SK-N-SH (cell line): ENCODE measurements at regions of chr2 and their contacts with region 1.

Region 1: DNA sequence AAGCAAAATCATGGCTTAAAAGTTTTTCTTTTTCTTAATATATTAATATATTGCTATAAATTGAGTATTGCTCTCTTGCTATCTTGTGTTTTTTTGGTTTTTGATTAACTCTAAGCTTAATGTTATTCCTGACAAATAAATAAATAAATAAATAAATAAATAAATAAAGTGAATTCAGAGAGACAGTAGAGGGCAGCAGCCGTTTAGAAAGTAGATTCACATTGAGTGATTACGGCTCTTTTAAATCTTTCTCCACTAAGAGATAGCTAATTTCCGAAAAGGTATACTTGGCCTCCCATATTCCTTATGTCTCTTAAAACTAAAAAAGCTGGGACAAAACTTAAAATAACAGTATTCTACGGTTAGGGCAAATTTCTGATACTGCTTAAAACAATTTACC is 34.3 kb downstream of the MSH2 start:
- DNase-seq: peak; percentile 64
- H3K4me3 ChIP-seq: no peak overlapping the region
- H3K27ac ChIP-seq: no peak overlapping the region
- H3K4me1 ChIP-seq: no peaks in the 10 kb centered on the region
- H3K27me3 ChIP-seq: no peaks in the 10 kb centered on the region
- CTCF ChIP-seq: peak; percentile 63
- EP300 ChIP-seq: no peak
- RAD21 ChIP-seq: peak; percentile 68

Region 2: GRCh38 chr2:47414682-47415458 is 22.4 kb before region 1 on chr2:
- CTCF ChIA-PET with region 1: interaction called, 12 read pairs
- POLR2A ChIA-PET with region 1: interaction called, 4 read pairs
- DNase-seq: no peak
- H3K4me3 ChIP-seq: no peak overlapping the region
- H3K27ac ChIP-seq: no peak overlapping the region
- H3K4me1 ChIP-seq: no peaks in the 10 kb centered on the region
- H3K27me3 ChIP-seq: no peaks in the 10 kb centered on the region
- CTCF ChIP-seq: no peak
- EP300 ChIP-seq: no peak
- RAD21 ChIP-seq: no peak

Region 3: GRCh38 chr2:47452761-47453160 is 15.5 kb after region 1 on chr2:
- CTCF ChIA-PET with region 1: interaction called, 13 read pairs
- POLR2A ChIA-PET with region 1: no interaction called
- DNase-seq: no peak
- H3K4me3 ChIP-seq: no peak overlapping the region
- H3K27ac ChIP-seq: no peak overlapping the region
- H3K4me1 ChIP-seq: peaks cover 0 to 2% of the 10 kb centered on the region in 2 experiments; a peak in 1 of 4 replicates
- H3K27me3 ChIP-seq: no peaks in the 10 kb centered on the region
- CTCF ChIP-seq: no peak
- EP300 ChIP-seq: no peak
- RAD21 ChIP-seq: no peak

Region 4: DNA sequence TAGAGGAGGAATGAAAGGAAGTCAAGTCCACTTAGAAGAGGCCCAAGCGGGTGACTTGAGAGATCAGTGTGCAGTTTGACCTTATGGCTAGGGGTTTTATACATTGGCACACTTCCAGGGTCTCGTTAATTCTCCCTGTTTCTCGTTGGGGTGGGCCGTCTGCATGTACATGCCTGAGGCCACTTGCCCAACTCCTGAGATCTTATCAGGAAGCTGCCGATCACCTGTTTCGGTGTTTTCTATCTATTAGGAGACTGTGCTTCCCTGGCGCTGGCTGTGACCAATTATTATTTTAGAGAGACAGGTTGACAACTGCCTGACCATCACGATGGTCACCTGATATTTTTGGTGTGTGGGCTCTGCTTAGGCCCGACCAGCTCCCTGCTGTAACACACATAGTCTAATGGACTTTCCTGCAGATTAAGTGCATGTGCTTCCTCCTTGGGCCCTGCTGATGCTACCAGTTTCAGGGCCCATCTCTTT is 314.6 kb after region 1 on chr2:
- CTCF ChIA-PET with region 1: interaction called, 19 read pairs
- POLR2A ChIA-PET with region 1: no interaction called
- DNase-seq: no peak
- H3K4me3 ChIP-seq: no peak overlapping the region
- H3K27ac ChIP-seq: no peak overlapping the region
- H3K4me1 ChIP-seq: peaks cover 4% of the 10 kb centered on the region in 2 experiments; a peak in 1 of 4 replicates
- H3K27me3 ChIP-seq: no peaks in the 10 kb centered on the region
- CTCF ChIP-seq: no peak
- EP300 ChIP-seq: no peak
- RAD21 ChIP-seq: no peak

Region 5: DNA sequence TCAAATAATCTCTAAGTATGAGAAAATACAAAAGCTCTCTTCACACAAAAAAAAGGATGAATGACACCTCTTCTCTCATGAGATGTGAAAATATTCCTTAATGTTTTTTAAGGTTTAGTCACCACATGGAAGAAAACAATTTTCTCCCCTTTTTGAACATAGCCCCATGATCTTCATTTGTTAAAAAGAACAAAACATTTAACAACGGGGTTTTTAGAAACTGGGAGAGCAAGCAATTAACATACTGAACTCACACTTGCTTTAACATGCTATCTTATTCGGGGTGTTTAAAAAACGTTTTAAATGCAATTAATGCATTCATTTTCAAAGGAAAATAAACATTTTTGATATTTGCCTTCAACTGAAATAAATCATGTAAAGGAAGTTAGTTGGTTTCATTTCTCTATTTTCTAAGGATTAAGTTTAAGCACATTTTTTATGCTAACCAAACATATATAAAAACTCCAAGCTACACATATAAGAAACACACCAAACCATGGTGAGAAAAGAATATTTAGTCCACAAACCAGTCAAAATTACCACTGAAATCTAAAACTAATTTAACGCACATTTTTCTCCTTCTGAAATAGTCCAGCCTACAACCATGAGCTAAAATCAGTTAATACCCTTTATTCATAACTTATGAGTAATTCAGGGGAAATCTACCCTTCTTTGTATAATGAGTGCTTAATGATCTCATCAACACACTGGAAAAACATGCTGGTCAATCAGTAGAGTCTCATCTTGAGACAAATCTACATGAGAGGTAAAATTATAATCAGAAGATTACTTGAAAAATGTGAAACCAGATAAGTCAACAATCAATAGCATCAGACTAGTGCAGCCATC is 460.8 kb after region 1 on chr2:
- CTCF ChIA-PET with region 1: no interaction called
- POLR2A ChIA-PET with region 1: no interaction called
- DNase-seq: no peak
- H3K4me3 ChIP-seq: no peak overlapping the region; a peak in 1 of 4 replicates
- H3K27ac ChIP-seq: 0 out of 4 replicates have a peak overlapping the region, but pooled peaks of 1 of the 2 experiments have one; percentile 13
- H3K4me1 ChIP-seq: peaks cover 6 to 15% of the 10 kb centered on the region in 2 experiments; a peak in 3 of 4 replicates
- H3K27me3 ChIP-seq: no peaks in the 10 kb centered on the region
- CTCF ChIP-seq: no peak
- EP300 ChIP-seq: no peak
- RAD21 ChIP-seq: no peak